T-cell (primary cell): ENCODE measurements at regions of chr5 and their contacts with region 1.

Region 1: GRCh38 chr5:6176102-6176693 is 202.1 kb downstream of the MED10 start:
- DNase-seq: no peak
- ATAC-seq: no peak
- H3K4me3 ChIP-seq: no peak overlapping the region
- H3K4me3 Mint-ChIP-seq: no peak overlapping the region
- H3K27ac ChIP-seq: no peak overlapping the region
- H3K27ac Mint-ChIP-seq: no peak overlapping the region
- H3K4me1 ChIP-seq: no peaks in the 10 kb centered on the region
- H3K4me1 Mint-ChIP-seq: no peaks in the 10 kb centered on the region
- H3K27me3 ChIP-seq: peaks cover 0 to 6% of the 10 kb centered on the region in 2 experiments
- H3K27me3 Mint-ChIP-seq: peaks cover 2 to 6% of the 10 kb centered on the region in 2 donors

Region 2: GRCh38 chr5:6202149-6202967 is 26.2 kb after region 1 on chr5:
- CTCF ChIA-PET with region 1: no interaction called
- POLR2A ChIA-PET with region 1: no interaction called
- DNase-seq: no peak
- ATAC-seq: no peak
- H3K4me3 ChIP-seq: no peak overlapping the region
- H3K4me3 Mint-ChIP-seq: no peak overlapping the region
- H3K27ac ChIP-seq: no peak overlapping the region
- H3K27ac Mint-ChIP-seq: no peak overlapping the region
- H3K4me1 ChIP-seq: no peaks in the 10 kb centered on the region
- H3K4me1 Mint-ChIP-seq: no peaks in the 10 kb centered on the region
- H3K27me3 ChIP-seq: peaks cover 0 to 18% of the 10 kb centered on the region in 2 experiments
- H3K27me3 Mint-ChIP-seq: peaks cover 3 to 14% of the 10 kb centered on the region in 2 donors

Region 3: DNA sequence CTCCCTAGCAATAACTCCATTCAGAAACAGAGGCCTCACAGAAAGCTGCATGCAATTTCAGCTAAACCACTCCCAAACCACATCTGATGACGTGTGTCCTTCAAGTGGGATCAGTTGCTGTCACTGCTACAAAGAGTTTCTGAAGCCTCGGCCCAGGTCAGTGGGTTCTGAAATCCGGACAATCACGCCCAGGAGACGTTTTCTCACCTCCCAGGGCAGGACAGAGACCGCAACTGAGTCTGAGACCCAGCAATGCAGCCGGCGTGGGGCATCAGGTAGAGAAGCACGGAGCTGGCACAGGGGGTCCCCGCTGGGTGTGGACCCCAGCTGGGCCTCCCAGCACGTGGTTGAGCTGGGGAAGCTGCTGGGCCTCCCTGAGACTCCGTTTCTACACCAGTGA is 269.8 kb after region 1 on chr5:
- CTCF ChIA-PET with region 1: no interaction called
- POLR2A ChIA-PET with region 1: interaction called in 1 of 2 experiments, 15 read pairs
- DNase-seq: no peak
- ATAC-seq: no peak
- H3K4me3 ChIP-seq: no peak overlapping the region
- H3K4me3 Mint-ChIP-seq: no peak overlapping the region
- H3K27ac ChIP-seq: no peak overlapping the region
- H3K27ac Mint-ChIP-seq: no peak overlapping the region
- H3K4me1 ChIP-seq: peaks cover 2 to 10% of the 10 kb centered on the region in 2 experiments
- H3K4me1 Mint-ChIP-seq: peaks cover 10 to 18% (median 17%) of the 10 kb centered on the region in 3 donors
- H3K27me3 ChIP-seq: peaks cover 6 to 48% of the 10 kb centered on the region in 2 experiments
- H3K27me3 Mint-ChIP-seq: peaks cover 35 to 44% of the 10 kb centered on the region in 2 donors